ENCODE measurements at regions of chr15 and their contacts with region 1.

Region 1: DNA sequence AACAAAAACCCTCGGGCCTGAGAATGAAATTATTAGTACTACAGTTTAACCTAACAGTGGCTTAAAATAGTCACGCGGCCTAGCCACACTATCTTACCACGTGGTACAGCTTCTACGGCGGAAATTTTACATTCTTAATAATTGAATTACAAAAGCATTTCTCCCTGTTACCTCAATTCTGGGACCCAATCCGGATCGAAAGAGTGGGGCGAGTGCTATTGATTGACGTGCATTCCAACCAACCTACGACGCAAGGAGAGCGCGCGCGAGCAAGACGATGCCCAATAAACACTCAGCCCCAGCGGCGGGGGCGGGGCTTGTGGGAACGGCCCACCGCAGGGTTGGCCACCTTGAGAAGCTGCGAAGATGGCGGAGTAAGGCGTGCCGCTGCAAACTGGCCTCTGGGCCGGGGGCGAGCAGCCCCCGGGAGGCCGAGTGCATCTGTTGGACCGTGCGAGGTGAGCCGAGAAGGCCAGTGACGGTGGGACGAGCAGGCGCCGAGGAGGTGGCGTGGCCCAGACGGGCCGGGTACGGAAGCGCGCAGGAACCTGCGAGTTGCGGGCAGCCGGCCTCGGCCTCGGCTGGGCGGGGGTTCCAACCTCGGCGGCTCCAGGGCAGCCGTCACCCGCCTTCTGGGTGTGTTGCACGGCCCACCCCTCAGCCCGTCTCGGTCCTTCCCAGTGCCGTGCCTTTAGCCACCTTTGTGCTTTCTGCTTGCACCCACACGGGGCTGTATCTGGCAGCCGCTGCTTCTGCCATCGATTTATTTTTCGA is 48.6 kb downstream of the OIP5 start:
- DNase-seq: peak; percentile 98
- H3K4me3 Mint-ChIP-seq: peak overlapping the region; percentile 98
- H3K27ac Mint-ChIP-seq: peak overlapping the region; percentile 92
- H3K4me1 Mint-ChIP-seq: peaks cover 51% of the 10 kb centered on the region
- H3K27me3 Mint-ChIP-seq: peaks cover 2% of the 10 kb centered on the region

Region 2: GRCh38 chr15:40564591-40565332 is 719.1 kb before region 1 on chr15 and contains the start of gene CCDC32:
- CTCF ChIA-PET with region 1: no interaction called
- POLR2A ChIA-PET with region 1: no interaction called
- intact Hi-C with region 1: loop called (anchors 5 kb)
- DNase-seq: peak; percentile 98
- H3K4me3 Mint-ChIP-seq: peak within 1 kb of the TSS; percentile 96
- H3K27ac Mint-ChIP-seq: peak within 1 kb of the TSS; percentile 92
- H3K4me1 Mint-ChIP-seq: peaks cover 48% of the 10 kb centered on the region
- H3K27me3 Mint-ChIP-seq: peaks cover 2% of the 10 kb centered on the region
- total RNA-seq, gene CCDC32: 28.6 to 29.2 TPM

Region 3: GRCh38 chr15:41116116-41116871 is 167.5 kb before region 1 on chr15 and contains the start of gene INO80:
- CTCF ChIA-PET with region 1: no interaction called
- POLR2A ChIA-PET with region 1: no interaction called
- intact Hi-C with region 1: loop called (anchors 1 kb)
- DNase-seq: peak; percentile 98
- H3K4me3 Mint-ChIP-seq: peak within 1 kb of the TSS; percentile 91
- H3K27ac Mint-ChIP-seq: peak within 1 kb of the TSS; percentile 98
- H3K4me1 Mint-ChIP-seq: peaks cover 12% of the 10 kb centered on the region
- H3K27me3 Mint-ChIP-seq: no peaks in the 10 kb centered on the region
- total RNA-seq, gene INO80: 19.9 to 22.8 TPM

Region 4: DNA sequence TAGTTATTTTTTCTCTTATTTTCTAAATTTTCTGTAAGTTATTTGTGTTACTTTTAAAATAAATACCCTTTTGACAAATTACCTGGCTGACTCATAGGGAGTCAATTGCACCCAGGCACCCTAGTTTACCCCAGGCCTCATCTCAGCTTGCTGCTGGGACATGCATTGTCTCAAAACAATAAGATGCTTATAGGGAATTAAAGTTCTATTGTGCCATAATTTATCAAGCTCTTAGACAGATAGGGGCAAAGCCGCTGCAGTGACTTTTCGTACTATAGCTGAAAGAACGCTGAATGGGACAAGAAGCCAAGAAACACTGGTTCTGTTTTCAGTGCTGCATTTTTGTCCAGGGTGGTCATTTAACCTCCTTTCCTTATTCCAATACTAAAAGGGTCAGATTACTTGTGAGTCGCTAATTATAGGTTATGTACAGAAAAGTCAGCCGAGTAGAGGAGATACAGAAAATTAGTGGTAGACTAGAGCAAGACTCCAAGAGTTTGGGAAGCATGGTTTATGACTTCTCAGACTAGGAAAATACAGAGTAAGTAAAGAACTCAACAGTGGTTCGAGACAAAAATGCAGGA is 103.5 kb before region 1 on chr15:
- CTCF ChIA-PET with region 1: no interaction called
- POLR2A ChIA-PET with region 1: no interaction called
- intact Hi-C with region 1: no loop called
- DNase-seq: no peak
- H3K4me3 Mint-ChIP-seq: no peak overlapping the region
- H3K27ac Mint-ChIP-seq: no peak overlapping the region
- H3K4me1 Mint-ChIP-seq: no peaks in the 10 kb centered on the region
- H3K27me3 Mint-ChIP-seq: no peaks in the 10 kb centered on the region

Region 5: DNA sequence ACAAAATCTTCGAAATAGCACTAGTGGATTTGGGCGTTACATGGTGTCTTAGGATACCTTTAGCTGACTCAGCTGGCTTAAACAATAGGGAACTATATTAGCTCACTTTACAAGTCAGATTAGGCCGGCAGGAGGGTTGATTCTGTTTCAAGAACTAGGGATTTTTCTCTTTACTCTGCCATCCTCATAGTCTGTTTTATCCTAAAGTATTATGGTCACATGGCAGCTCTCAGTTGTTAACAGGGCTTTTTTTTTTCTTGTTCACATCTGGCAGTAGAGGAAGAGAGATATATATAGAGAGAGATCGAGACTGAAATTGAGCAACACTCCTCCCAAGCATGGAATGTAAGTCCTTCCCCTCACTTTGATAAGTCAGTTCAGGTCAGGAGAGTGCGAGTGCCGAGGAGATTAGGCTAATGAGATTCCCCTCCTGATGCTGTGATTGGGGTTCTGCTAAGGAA is 19.9 kb before region 1 on chr15:
- CTCF ChIA-PET with region 1: no interaction called
- POLR2A ChIA-PET with region 1: no interaction called
- intact Hi-C with region 1: no loop called
- DNase-seq: no peak
- H3K4me3 Mint-ChIP-seq: no peak overlapping the region
- H3K27ac Mint-ChIP-seq: no peak overlapping the region
- H3K4me1 Mint-ChIP-seq: no peaks in the 10 kb centered on the region
- H3K27me3 Mint-ChIP-seq: no peaks in the 10 kb centered on the region

Region 6: GRCh38 chr15:41331833-41332787 is 48.3 kb after region 1 on chr15 and contains the start of gene OIP5:
- CTCF ChIA-PET with region 1: interaction called, 4 read pairs
- POLR2A ChIA-PET with region 1: interaction called, 13 read pairs
- intact Hi-C with region 1: loop called (anchors 1 kb)
- DNase-seq: peak; percentile 99
- H3K4me3 Mint-ChIP-seq: peak within 1 kb of the TSS; percentile 99
- H3K27ac Mint-ChIP-seq: peak within 1 kb of the TSS; percentile 97
- H3K4me1 Mint-ChIP-seq: peaks cover 23% of the 10 kb centered on the region
- H3K27me3 Mint-ChIP-seq: no peaks in the 10 kb centered on the region
- total RNA-seq, gene OIP5: 11.1 to 13.0 TPM

Region 7: GRCh38 chr15:41401904-41402267 is 118.0 kb after region 1 on chr15:
- CTCF ChIA-PET with region 1: no interaction called
- POLR2A ChIA-PET with region 1: no interaction called
- intact Hi-C with region 1: loop called (anchors 2 kb)
- DNase-seq: no peak
- H3K4me3 Mint-ChIP-seq: peak overlapping the region; percentile 90
- H3K27ac Mint-ChIP-seq: peak overlapping the region; percentile 87
- H3K4me1 Mint-ChIP-seq: peaks cover 15% of the 10 kb centered on the region
- H3K27me3 Mint-ChIP-seq: no peaks in the 10 kb centered on the region